Tibial artery (tissue), 4 donors: ENCODE measurements at regions of chr19 and their contacts with region 1.

Region 1: DNA sequence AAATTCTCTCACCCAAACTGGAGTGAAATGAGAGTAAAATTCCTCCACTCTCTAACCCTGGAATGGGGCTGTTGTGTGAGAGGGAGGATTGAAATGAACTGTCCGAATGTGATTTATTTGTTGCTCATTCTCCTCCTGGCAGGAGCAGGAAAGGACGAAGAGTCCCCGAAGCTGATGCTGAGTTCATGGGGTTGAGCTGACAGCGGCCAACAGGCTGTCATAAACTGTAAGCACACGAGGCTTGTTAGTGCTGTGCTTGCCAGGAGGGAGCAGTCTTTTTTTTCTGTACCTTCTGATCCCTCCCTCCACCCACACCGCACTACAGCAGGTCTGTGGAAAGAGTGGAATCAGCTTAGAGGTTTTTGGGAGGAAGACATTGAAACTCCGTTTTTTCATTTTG is 33.1 kb upstream of the ZNF331 start:
- DNase-seq: peak in 1 of 2 donors; percentile 32
- H3K4me3 ChIP-seq: peak overlapping the region in 1 of 2 donors; percentile 11
- H3K27ac ChIP-seq: no peak overlapping the region
- H3K4me1 ChIP-seq: peaks cover 0 to 3% (median 0%) of the 10 kb centered on the region in 4 donors
- H3K27me3 ChIP-seq: peaks cover 0 to 26% of the 10 kb centered on the region in 2 donors
- CTCF ChIP-seq: no peak

Region 2: GRCh38 chr19:53103198-53103944 is 401.5 kb before region 1 on chr19 and contains the start of gene ZNF160:
- intact Hi-C with region 1: no loop called
- DNase-seq: peak; percentile 98 to 100
- H3K4me3 ChIP-seq: peak within 1 kb of the TSS; percentile 67 to 99
- H3K27ac ChIP-seq: peak within 1 kb of the TSS; percentile 84 to 100
- H3K4me1 ChIP-seq: peaks cover 0 to 27% (median 16%) of the 10 kb centered on the region in 4 donors
- H3K27me3 ChIP-seq: no peaks in the 10 kb centered on the region
- CTCF ChIP-seq: no peak

Region 3: DNA sequence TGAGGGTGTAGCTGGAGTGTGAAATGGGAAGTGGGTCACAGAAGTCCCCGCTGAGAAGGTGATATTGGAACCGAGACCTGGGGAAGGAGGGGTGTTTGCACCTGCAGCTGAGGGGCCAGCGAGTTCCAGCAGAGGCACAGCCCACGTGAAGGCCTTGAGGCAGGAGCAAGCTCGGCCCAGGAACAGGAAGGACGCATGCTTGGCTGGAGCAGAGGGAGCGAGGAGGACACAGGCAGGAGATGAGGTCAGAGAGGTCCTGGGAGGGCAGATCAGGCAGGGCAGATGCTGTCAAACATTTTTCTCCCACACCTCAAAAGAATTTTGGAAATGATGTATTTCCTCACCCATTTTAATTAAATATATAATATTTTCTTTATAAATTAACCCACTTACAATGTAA is 381.5 kb before region 1 on chr19:
- intact Hi-C with region 1: no loop called
- DNase-seq: no peak
- H3K4me3 ChIP-seq: no peak overlapping the region
- H3K27ac ChIP-seq: no peak overlapping the region
- H3K4me1 ChIP-seq: no peaks in the 10 kb centered on the region
- H3K27me3 ChIP-seq: no peaks in the 10 kb centered on the region
- CTCF ChIP-seq: no peak

Region 4: GRCh38 chr19:53333463-53334449 is 171.1 kb before region 1 on chr19 and contains the start of gene ZNF845:
- intact Hi-C with region 1: no loop called
- DNase-seq: peak; percentile 93 to 96
- H3K4me3 ChIP-seq: peak within 1 kb of the TSS; percentile 64 to 67
- H3K27ac ChIP-seq: peak within 1 kb of the TSS; percentile 78 to 86
- H3K4me1 ChIP-seq: peaks cover 0 to 13% (median 8%) of the 10 kb centered on the region in 4 donors
- H3K27me3 ChIP-seq: no peaks in the 10 kb centered on the region
- CTCF ChIP-seq: no peak

Region 5: GRCh38 chr19:53537480-53538383 is 32.8 kb after region 1 on chr19 and contains the start of gene ZNF331:
- intact Hi-C with region 1: no loop called
- DNase-seq: peak; percentile 78 to 93
- H3K4me3 ChIP-seq: peak within 1 kb of the TSS; percentile 64 to 77
- H3K27ac ChIP-seq: peak within 1 kb of the TSS; percentile 87 to 88
- H3K4me1 ChIP-seq: peaks cover 0 to 9% (median 2%) of the 10 kb centered on the region in 4 donors
- H3K27me3 ChIP-seq: no peaks in the 10 kb centered on the region
- CTCF ChIP-seq: peak; percentile 47 to 70

Region 6: GRCh38 chr19:53646144-53646543 is 141.3 kb after region 1 on chr19:
- intact Hi-C with region 1: loop called (anchors 5 kb)
- DNase-seq: no peak
- H3K4me3 ChIP-seq: no peak overlapping the region
- H3K27ac ChIP-seq: no peak overlapping the region
- H3K4me1 ChIP-seq: no peaks in the 10 kb centered on the region
- H3K27me3 ChIP-seq: no peaks in the 10 kb centered on the region
- CTCF ChIP-seq: no peak